CD8-positive, alpha-beta T cell (primary cell): ENCODE measurements at regions of chr1 and their contacts with region 1.

Region 1: DNA sequence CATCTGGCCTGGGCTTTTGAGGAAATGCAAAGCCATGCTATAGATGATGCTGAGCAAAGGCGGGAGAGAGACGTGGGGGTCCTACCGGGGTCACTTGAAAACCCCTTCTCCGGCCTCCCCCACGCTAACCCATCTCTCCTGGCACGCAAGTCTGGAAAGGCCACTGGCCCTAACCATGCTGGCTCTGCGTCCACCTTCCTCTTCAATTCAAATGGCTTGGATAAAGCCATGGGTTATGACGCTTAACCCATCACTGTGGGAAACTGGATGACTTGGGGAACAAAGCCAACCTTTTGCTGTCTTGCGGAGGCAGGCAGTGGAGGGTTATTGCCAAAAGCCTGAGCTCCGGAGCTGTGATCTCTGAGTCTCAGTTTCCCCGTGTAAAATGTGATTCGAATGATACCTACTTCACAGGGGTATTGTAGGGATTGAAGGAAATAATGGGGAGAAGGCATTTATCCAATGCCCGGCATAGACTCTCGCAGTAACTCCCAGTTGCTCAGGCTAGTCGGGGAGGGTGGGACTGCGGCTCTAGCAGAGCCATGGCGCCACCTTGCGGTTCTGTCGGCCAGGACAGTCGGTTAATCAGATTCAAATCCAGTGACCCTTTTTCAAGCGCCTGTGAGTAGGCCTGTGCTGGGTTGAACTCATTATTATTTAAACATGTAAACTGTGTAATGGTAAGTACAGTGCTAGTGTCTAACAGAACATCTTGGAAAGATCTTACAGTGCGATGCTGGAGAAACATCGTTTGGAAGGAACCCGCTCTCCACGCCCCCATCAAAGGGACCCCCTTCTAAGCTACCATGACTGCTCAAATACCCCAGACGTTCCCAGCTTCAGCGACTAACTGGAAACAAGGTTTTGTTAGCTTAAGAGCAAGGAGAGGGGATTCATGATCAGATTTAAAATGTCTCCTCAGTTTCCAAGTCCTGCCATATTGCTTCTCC is 20.3 kb downstream of the NEK2 start:
- DNase-seq: peak; percentile 63 to 86 (median 83)
- ATAC-seq: peak; percentile 95
- H3K4me3 ChIP-seq: no peak overlapping the region
- H3K4me3 Mint-ChIP-seq: no peak overlapping the region
- H3K27ac ChIP-seq: no peak overlapping the region
- H3K27ac Mint-ChIP-seq: no peak overlapping the region
- H3K4me1 ChIP-seq: no peaks in the 10 kb centered on the region
- H3K4me1 Mint-ChIP-seq: no peaks in the 10 kb centered on the region
- H3K27me3 ChIP-seq: no peaks in the 10 kb centered on the region
- H3K27me3 Mint-ChIP-seq: peaks cover 2% of the 10 kb centered on the region
- CTCF ChIP-seq: peak; percentile 86

Region 2: GRCh38 chr1:210407207-210407886 is 1247.8 kb before region 1 on chr1:
- CTCF ChIA-PET with region 1: no interaction called
- POLR2A ChIA-PET with region 1: no interaction called
- intact Hi-C with region 1: loop called (anchors 1 kb)
- DNase-seq: peak; percentile 33 to 85 (median 70)
- ATAC-seq: peak; percentile 64
- H3K4me3 ChIP-seq: no peak overlapping the region
- H3K4me3 Mint-ChIP-seq: no peak overlapping the region
- H3K27ac ChIP-seq: no peak overlapping the region
- H3K27ac Mint-ChIP-seq: no peak overlapping the region
- H3K4me1 ChIP-seq: no peaks in the 10 kb centered on the region
- H3K4me1 Mint-ChIP-seq: peaks cover 3% of the 10 kb centered on the region
- H3K27me3 ChIP-seq: no peaks in the 10 kb centered on the region
- H3K27me3 Mint-ChIP-seq: no peaks in the 10 kb centered on the region
- CTCF ChIP-seq: peak; percentile 92

Region 3: GRCh38 chr1:210584439-210585113 is 1070.5 kb before region 1 on chr1:
- CTCF ChIA-PET with region 1: no interaction called
- POLR2A ChIA-PET with region 1: no interaction called
- intact Hi-C with region 1: loop called (anchors 5 to 10 kb)
- DNase-seq: peak; percentile 37 to 72 (median 63)
- ATAC-seq: no peak
- H3K4me3 ChIP-seq: no peak overlapping the region
- H3K4me3 Mint-ChIP-seq: no peak overlapping the region
- H3K27ac ChIP-seq: no peak overlapping the region
- H3K27ac Mint-ChIP-seq: no peak overlapping the region
- H3K4me1 ChIP-seq: peaks cover 4% of the 10 kb centered on the region
- H3K4me1 Mint-ChIP-seq: peaks cover 15% of the 10 kb centered on the region
- H3K27me3 ChIP-seq: no peaks in the 10 kb centered on the region
- H3K27me3 Mint-ChIP-seq: no peaks in the 10 kb centered on the region
- CTCF ChIP-seq: peak; percentile 41

Region 4: DNA sequence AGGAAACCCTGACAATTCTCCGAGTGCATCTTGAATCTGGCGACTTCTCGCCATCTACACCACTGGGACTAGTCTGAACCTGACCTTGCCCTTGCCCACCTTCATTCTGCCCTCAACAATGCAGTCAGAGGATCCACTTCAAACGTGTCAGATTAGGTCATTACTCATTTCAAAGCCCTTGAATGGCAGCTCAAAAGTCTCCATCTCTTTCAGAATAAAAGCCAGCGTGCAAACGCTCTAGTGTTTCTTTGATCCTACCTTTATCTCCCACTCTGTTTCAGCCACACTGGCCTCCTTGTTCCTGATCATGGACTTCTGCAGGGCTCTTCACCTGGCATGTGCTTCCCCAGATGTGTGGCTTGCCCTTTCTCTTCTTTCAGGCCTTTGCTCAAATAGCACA is 107.4 kb before region 1 on chr1:
- CTCF ChIA-PET with region 1: no interaction called
- POLR2A ChIA-PET with region 1: no interaction called
- intact Hi-C with region 1: no loop called
- DNase-seq: no peak
- ATAC-seq: no peak
- H3K4me3 ChIP-seq: no peak overlapping the region
- H3K4me3 Mint-ChIP-seq: no peak overlapping the region
- H3K27ac ChIP-seq: no peak overlapping the region
- H3K27ac Mint-ChIP-seq: no peak overlapping the region
- H3K4me1 ChIP-seq: no peaks in the 10 kb centered on the region
- H3K4me1 Mint-ChIP-seq: peaks cover 2% of the 10 kb centered on the region
- H3K27me3 ChIP-seq: no peaks in the 10 kb centered on the region
- H3K27me3 Mint-ChIP-seq: peaks cover 6% of the 10 kb centered on the region
- CTCF ChIP-seq: no peak

Region 5: GRCh38 chr1:211643324-211644212 is 11.5 kb before region 1 on chr1:
- CTCF ChIA-PET with region 1: interaction called, 10 read pairs
- POLR2A ChIA-PET with region 1: no interaction called
- intact Hi-C with region 1: no loop called
- DNase-seq: peak in 5 of 9 experiments; percentile 14 to 66 (median 25)
- ATAC-seq: no peak
- H3K4me3 ChIP-seq: no peak overlapping the region
- H3K4me3 Mint-ChIP-seq: peak overlapping the region; percentile 45
- H3K27ac ChIP-seq: no peak overlapping the region
- H3K27ac Mint-ChIP-seq: no peak overlapping the region
- H3K4me1 ChIP-seq: peaks cover 9% of the 10 kb centered on the region
- H3K4me1 Mint-ChIP-seq: peaks cover 14% of the 10 kb centered on the region
- H3K27me3 ChIP-seq: no peaks in the 10 kb centered on the region
- H3K27me3 Mint-ChIP-seq: no peaks in the 10 kb centered on the region
- CTCF ChIP-seq: no peak